Breast epithelium (tissue), 4 donors: ENCODE measurements at regions of chr9 and their contacts with region 1.

Region 1: GRCh38 chr9:117853442-117853841 is 149.2 kb downstream of the TLR4 start:
- DNase-seq: no peak
- H3K4me3 ChIP-seq: no peak overlapping the region
- H3K27ac ChIP-seq: no peak overlapping the region
- H3K4me1 ChIP-seq: no peaks in the 10 kb centered on the region
- H3K27me3 ChIP-seq: no peaks in the 10 kb centered on the region
- CTCF ChIP-seq: no peak
- POLR2A ChIP-seq: no peak

Region 2: DNA sequence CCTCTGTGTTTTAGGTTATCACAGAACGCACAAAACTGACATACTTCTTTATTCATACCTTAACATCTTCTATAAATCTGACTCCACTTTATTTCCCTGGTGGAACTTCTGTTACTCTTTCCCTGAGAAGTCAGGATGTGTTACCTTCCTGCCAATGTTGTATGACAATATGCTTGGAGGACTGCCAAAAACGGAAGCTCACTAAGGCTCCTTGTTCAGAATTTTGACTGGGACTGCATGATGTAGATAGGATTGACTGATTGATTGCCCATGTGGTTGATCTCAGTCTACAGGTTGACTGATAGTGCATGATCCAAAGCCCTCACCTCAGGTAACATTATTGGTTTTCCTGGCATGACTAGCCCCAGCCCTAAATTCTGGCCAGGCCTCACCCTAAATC is 170.2 kb after region 1 on chr9:
- intact Hi-C with region 1: no loop called
- DNase-seq: no peak
- H3K4me3 ChIP-seq: no peak overlapping the region
- H3K27ac ChIP-seq: no peak overlapping the region
- H3K4me1 ChIP-seq: no peaks in the 10 kb centered on the region
- H3K27me3 ChIP-seq: no peaks in the 10 kb centered on the region
- CTCF ChIP-seq: no peak
- POLR2A ChIP-seq: no peak

Region 3: DNA sequence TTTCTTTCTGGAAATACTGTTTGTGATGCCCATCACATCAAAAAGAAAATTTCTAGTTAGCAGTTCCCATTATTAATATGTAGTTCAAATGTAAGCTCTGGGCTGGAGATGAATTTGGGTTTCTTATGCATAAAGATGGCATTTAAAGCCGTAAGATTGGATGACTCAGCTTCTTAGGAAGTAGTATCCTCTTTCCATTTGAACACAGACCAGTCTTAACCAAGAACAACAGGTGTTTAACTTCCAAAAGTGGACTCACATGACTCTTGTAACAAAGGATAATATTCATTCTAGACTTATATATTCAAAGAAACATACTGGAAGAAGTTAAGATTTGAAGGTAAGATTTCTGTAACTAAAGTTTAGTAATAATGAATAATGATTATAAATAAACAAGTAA is 181.3 kb after region 1 on chr9:
- intact Hi-C with region 1: loop called (anchors 5 kb)
- DNase-seq: no peak
- H3K4me3 ChIP-seq: no peak overlapping the region
- H3K27ac ChIP-seq: no peak overlapping the region
- H3K4me1 ChIP-seq: no peaks in the 10 kb centered on the region
- H3K27me3 ChIP-seq: no peaks in the 10 kb centered on the region
- CTCF ChIP-seq: no peak
- POLR2A ChIP-seq: no peak